ENCODE measurements at regions of chr1 and their contacts with region 1.

Region 1: DNA sequence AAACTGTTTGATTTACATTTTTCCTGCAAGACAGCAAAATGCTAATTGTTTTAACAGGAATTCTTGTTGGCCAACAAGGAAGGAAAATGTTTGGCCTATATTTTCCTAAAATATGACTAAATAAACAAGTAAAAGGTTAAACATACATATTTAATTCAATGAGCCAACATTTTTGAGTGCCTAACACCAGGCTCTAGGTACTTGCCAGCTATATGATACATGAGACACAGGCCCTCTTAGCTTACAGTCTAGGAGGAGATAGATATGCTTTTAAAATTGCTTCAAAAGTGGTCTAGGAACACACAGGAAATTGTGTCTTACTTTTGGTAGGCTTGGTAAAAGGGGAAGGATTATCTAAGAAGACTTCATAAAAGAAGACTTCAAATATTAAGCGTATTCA is 50.9 kb downstream of the PIGK start:
- H3K4me3 Mint-ChIP-seq: no peak overlapping the region
- H3K27ac Mint-ChIP-seq: no peak overlapping the region
- H3K4me1 Mint-ChIP-seq: no peaks in the 10 kb centered on the region
- H3K27me3 Mint-ChIP-seq: no peaks in the 10 kb centered on the region

Region 2: GRCh38 chr1:77313491-77313890 is 145.1 kb after region 1 on chr1:
- intact Hi-C with region 1: loop called (anchors 10 kb)
- H3K4me3 Mint-ChIP-seq: no peak overlapping the region
- H3K27ac Mint-ChIP-seq: no peak overlapping the region
- H3K4me1 Mint-ChIP-seq: peaks cover 16% of the 10 kb centered on the region
- H3K27me3 Mint-ChIP-seq: no peaks in the 10 kb centered on the region

Region 3: DNA sequence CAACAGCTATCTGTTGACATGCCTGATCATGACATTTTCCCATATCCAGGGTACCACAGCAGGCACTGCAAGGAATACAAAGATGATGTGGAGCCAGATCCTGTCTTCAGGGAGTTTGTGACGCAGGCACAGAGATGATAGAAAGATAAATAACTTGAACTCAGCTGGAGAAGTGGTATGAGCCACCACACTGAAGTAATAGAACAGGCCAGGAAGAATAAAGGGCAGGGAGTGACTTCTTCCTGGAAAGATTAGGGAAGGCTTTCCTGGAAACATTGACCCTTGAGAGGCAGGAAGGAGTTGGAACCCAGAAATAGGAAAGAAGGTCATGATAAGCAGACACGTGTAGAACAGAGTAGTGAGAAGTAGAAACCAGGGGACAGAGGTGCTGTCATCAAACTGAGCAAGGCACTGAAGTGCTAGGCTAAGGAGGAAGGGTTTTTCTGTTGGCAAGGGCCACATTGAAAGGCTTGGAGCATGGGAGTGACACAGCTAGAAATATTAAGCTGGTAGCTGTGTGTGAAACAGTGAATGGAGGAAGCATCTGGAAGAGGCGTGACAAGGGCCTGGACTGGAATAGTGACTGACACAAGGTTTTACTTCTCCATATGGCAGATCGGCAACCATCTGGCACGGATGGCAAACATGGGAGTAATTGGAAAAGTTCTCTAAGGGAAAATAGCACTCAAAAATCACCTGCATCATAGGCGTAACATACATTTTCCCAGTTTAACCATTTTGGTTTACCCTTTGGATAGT is 181.8 kb after region 1 on chr1:
- intact Hi-C with region 1: no loop called
- H3K4me3 Mint-ChIP-seq: no peak overlapping the region
- H3K27ac Mint-ChIP-seq: no peak overlapping the region
- H3K4me1 Mint-ChIP-seq: peaks cover 23% of the 10 kb centered on the region
- H3K27me3 Mint-ChIP-seq: no peaks in the 10 kb centered on the region